ENCODE measurements at regions of chr1 and their contacts with region 1.

Region 1: GRCh38 chr1:242033447-242033846 is 34.5 kb upstream of the MAP1LC3C start:
- DNase-seq: no peak
- ATAC-seq: no peak
- H3K4me3 ChIP-seq: no peak overlapping the region
- H3K27ac ChIP-seq: no peak overlapping the region
- H3K4me1 ChIP-seq: no peaks in the 10 kb centered on the region
- H3K27me3 ChIP-seq: no peaks in the 10 kb centered on the region
- CTCF ChIP-seq: no peak
- POLR2A ChIP-seq: no peak
- RAD21 ChIP-seq: no peak

Region 2: GRCh38 chr1:242017584-242018233 is 15.7 kb before region 1 on chr1:
- CTCF ChIA-PET with region 1: no interaction called
- POLR2A ChIA-PET with region 1: no interaction called
- dilution Hi-C with region 1: no loop called
- in situ Hi-C with region 1: no loop called
- intact Hi-C with region 1: loop called (anchors 1 kb)
- DNase-seq: peak; percentile 21
- ATAC-seq: peak; percentile 59; the same call in 1 of the 2 replicates
- H3K4me3 ChIP-seq: no peak overlapping the region
- H3K27ac ChIP-seq: no peak overlapping the region
- H3K4me1 ChIP-seq: no peaks in the 10 kb centered on the region
- H3K27me3 ChIP-seq: no peaks in the 10 kb centered on the region
- CTCF ChIP-seq: peak; percentile 38; the same call in 1 of the 2 replicates
- POLR2A ChIP-seq: no peak
- RAD21 ChIP-seq: peak; percentile 32

Region 3: GRCh38 chr1:242178924-242179708 is 145.7 kb after region 1 on chr1:
- CTCF ChIA-PET with region 1: no interaction called
- POLR2A ChIA-PET with region 1: no interaction called
- dilution Hi-C with region 1: no loop called
- in situ Hi-C with region 1: no loop called
- intact Hi-C with region 1: no loop called
- DNase-seq: no peak
- ATAC-seq: no peak
- H3K4me3 ChIP-seq: no peak overlapping the region
- H3K27ac ChIP-seq: no peak overlapping the region
- H3K4me1 ChIP-seq: no peaks in the 10 kb centered on the region
- H3K27me3 ChIP-seq: no peaks in the 10 kb centered on the region
- CTCF ChIP-seq: no peak
- POLR2A ChIP-seq: no peak
- RAD21 ChIP-seq: no peak

Measured in IMR-90 (cell line).